ENCODE measurements at regions of chr11 and their contacts with region 1.

Region 1: DNA sequence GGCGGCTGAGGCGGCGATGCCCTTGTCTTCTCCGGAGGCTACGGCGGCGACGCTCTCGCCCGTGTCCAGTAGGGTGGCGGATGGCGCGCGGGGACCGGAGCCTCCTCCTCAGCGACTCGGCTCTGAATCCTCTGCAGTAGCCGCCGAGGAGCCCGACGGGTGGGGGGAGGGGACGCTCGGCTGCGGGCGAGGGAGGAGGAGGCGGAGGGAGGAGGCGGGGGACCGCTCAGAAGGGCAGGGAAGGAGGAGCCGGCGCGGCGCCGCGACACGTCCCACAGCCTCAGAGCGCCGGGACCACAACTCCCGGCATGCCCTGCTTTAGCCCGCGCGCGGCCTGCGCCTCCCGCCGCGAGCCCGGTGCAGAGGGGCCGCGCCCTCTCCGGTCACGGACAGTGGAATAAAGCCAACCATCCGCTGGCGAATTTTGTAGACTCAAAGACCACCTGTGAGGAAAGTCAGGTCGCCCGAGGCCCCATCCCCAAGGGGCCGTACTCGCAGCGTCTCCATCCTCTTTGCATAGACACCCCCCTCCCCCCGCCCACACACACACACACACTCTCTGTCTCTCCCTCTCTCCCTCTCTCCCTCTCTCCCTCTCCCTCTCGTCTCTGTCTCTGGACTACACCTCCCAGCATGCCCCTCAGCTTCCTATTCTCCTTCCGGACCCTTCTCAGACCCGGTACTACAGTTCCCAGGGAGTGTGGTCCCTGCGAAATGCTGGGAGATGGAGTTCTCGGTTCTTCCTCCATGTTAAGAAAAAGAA is at the start of gene FAM168A:
- DNase-seq: peak; percentile 98 to 99
- H3K4me3 ChIP-seq: peak within 1 kb of the TSS; percentile 88
- H3K4me3 Mint-ChIP-seq: peak within 1 kb of the TSS; percentile 87
- H3K27ac Mint-ChIP-seq: peak within 1 kb of the TSS; percentile 74
- H3K4me1 ChIP-seq: 0 out of 2 replicates have a peak, but pooled peaks cover 5% of the 10 kb centered on the region
- H3K4me1 Mint-ChIP-seq: peaks cover 20% of the 10 kb centered on the region
- H3K27me3 ChIP-seq: no peaks in the 10 kb centered on the region
- H3K27me3 Mint-ChIP-seq: no peaks in the 10 kb centered on the region
- CTCF ChIP-seq: peak; percentile 46 to 53
- total RNA-seq, gene FAM168A: 46.0 and 50.2 TPM in 2 replicates

Region 2: DNA sequence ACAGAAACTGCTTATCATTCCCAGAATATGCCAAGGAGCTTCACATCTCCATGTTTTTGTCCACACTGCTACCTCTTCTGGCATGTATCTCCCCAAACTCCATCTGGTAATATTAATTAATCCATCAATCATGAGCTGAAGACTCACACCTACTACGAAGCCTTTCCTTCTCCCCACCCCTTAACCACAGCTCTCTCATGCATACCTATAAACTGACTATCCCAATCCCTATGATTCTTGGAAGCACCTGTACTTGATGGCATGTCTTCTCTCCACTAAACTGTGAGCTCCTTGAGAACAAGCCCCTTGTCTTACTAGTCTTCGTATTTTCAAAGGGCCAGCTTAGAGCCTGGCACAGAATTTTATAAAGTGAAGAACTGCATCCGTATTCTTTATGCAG is 174.6 kb before region 1 on chr11:
- CTCF ChIA-PET with region 1: interaction called, 10 read pairs
- POLR2A ChIA-PET with region 1: no interaction called
- intact Hi-C with region 1: no loop called
- DNase-seq: no peak
- H3K4me3 ChIP-seq: no peak overlapping the region
- H3K4me3 Mint-ChIP-seq: no peak overlapping the region
- H3K27ac Mint-ChIP-seq: no peak overlapping the region
- H3K4me1 ChIP-seq: no peaks in the 10 kb centered on the region
- H3K4me1 Mint-ChIP-seq: no peaks in the 10 kb centered on the region
- H3K27me3 ChIP-seq: no peaks in the 10 kb centered on the region
- H3K27me3 Mint-ChIP-seq: no peaks in the 10 kb centered on the region
- CTCF ChIP-seq: no peak

Region 3: DNA sequence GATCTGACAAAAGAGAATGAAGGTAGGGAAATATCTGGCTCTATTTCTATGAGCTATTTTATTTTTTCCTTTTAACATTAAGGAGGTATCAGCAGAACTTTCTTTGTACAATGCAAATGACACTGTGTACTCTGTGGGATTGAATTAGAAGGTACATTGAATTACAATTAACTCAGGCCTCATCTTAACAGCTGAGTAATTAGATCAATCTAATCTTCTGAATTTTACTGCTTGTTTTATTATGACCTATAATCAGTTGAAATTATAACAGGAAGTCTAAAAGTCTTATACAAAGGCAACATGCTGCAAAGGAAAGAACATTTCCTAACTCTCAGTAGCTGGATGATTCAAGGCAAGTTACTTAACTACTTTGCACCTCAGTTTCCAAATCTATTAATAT is 152.2 kb before region 1 on chr11:
- CTCF ChIA-PET with region 1: no interaction called
- POLR2A ChIA-PET with region 1: no interaction called
- intact Hi-C with region 1: no loop called
- DNase-seq: no peak
- H3K4me3 ChIP-seq: no peak overlapping the region
- H3K4me3 Mint-ChIP-seq: no peak overlapping the region
- H3K27ac Mint-ChIP-seq: no peak overlapping the region
- H3K4me1 ChIP-seq: no peaks in the 10 kb centered on the region
- H3K4me1 Mint-ChIP-seq: peaks cover 8% of the 10 kb centered on the region
- H3K27me3 ChIP-seq: no peaks in the 10 kb centered on the region
- H3K27me3 Mint-ChIP-seq: no peaks in the 10 kb centered on the region
- CTCF ChIP-seq: no peak

Region 4: DNA sequence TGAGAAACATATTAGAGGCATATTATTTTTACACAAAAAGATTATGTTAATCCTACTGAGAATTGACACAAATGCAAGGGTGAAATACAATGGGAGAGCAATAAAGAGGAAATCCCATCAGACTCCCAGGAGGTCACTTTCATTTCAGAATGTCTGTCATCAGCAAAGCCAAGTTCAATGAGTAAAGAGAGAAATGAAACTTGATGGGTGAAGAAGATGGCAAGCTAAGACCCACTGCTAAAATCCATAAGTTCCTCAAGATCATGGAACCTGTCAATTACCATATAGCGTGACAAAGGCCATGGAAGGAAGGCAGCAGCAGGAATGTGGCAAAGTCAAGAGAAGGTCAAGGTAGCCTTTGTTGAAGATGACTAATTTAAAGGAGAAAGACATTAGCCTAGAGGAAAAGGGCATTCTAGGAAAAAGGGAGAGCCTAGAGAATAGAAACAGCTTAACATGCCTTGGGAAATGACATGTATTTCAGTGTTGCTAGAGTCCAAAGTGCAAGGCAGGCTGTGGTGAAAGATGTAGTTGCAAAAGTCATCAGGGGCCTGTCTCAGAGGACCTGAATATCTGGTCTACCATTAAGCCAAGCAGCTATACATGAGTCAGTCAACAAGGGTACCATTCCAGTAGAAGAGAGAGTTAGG is 43.3 kb before region 1 on chr11:
- CTCF ChIA-PET with region 1: no interaction called
- POLR2A ChIA-PET with region 1: no interaction called
- intact Hi-C with region 1: loop called (anchors 5 kb)
- DNase-seq: peak; percentile 71 to 78
- H3K4me3 ChIP-seq: no peak overlapping the region
- H3K4me3 Mint-ChIP-seq: no peak overlapping the region
- H3K27ac Mint-ChIP-seq: no peak overlapping the region
- H3K4me1 ChIP-seq: peaks cover 20% of the 10 kb centered on the region
- H3K4me1 Mint-ChIP-seq: peaks cover 10% of the 10 kb centered on the region
- H3K27me3 ChIP-seq: no peaks in the 10 kb centered on the region
- H3K27me3 Mint-ChIP-seq: no peaks in the 10 kb centered on the region
- CTCF ChIP-seq: no peak

Region 5: GRCh38 chr11:73779084-73779902 is 181.2 kb after region 1 on chr11:
- CTCF ChIA-PET with region 1: no interaction called
- POLR2A ChIA-PET with region 1: no interaction called
- intact Hi-C with region 1: loop called (anchors 1 kb)
- DNase-seq: peak; percentile 100
- H3K4me3 ChIP-seq: peak overlapping the region; percentile 72
- H3K4me3 Mint-ChIP-seq: peak overlapping the region; percentile 99
- H3K27ac Mint-ChIP-seq: peak overlapping the region; percentile 99
- H3K4me1 ChIP-seq: peaks cover 21% of the 10 kb centered on the region
- H3K4me1 Mint-ChIP-seq: peaks cover 16% of the 10 kb centered on the region
- H3K27me3 ChIP-seq: no peaks in the 10 kb centered on the region
- H3K27me3 Mint-ChIP-seq: no peaks in the 10 kb centered on the region
- CTCF ChIP-seq: no peak